IMR-90 (cell line): ENCODE measurements at regions of chr6 and their contacts with region 1.

Region 1: DNA sequence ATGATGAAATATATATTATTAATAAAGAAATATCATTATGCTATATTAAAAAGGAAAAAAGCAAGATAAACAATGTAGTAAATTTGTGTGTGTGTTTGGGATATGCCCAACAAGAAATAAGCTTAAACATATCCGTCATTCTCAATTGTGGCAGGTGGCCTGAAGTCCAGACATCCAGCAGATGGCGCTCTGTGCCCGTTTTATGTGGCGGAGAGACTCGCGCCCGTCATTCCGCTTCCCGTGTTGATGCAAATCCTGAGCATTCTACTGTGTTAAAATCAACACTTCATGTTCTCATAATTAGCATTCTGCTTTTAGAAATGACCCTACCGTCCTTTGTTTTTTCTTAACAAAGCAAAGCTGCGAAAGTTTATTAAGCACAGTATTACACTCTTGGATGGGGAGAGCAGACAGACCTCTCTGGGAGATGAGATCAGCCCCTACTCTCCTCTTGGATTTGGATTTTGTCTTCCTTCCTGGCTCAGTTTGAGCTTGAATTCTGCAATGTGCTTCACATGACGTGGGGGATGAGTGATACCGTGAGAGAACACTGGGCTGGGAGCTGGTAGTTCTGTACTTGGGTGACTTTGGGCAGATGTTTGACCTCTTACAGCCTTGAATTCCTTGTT is 125.8 kb downstream of the MCHR2 start:
- DNase-seq: peak; percentile 51
- ATAC-seq: peak; percentile 93
- H3K4me3 ChIP-seq: no peak overlapping the region
- H3K27ac ChIP-seq: no peak overlapping the region
- H3K4me1 ChIP-seq: no peaks in the 10 kb centered on the region
- H3K27me3 ChIP-seq: peaks cover 31% of the 10 kb centered on the region
- CTCF ChIP-seq: peak; percentile 84
- POLR2A ChIP-seq: no peak
- RAD21 ChIP-seq: peak; percentile 87

Region 2: DNA sequence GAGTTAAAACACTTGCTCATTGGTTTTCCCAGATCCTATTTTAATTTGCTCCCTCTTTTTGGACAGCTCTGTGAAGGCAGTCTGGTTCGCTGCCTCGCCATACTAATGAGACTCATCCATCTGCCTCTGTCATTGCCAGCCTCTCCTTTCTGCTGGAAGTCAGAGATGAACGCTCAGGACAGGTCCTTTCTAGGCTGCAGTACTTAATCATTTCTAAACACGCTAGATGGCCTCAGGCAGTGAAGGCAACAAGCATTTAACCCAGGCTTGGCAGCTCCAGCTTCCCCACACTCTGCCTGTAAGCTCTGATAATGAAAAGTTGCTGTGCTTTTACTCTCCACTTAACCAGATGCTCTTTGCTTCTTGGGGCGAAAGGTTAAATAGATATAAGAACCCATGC is 1320.6 kb before region 1 on chr6:
- CTCF ChIA-PET with region 1: no interaction called
- POLR2A ChIA-PET with region 1: no interaction called
- dilution Hi-C with region 1: no loop called
- in situ Hi-C with region 1: no loop called
- intact Hi-C with region 1: no loop called
- DNase-seq: no peak
- ATAC-seq: no peak
- H3K4me3 ChIP-seq: no peak overlapping the region
- H3K27ac ChIP-seq: no peak overlapping the region
- H3K4me1 ChIP-seq: no peaks in the 10 kb centered on the region
- H3K27me3 ChIP-seq: no peaks in the 10 kb centered on the region
- CTCF ChIP-seq: no peak
- POLR2A ChIP-seq: no peak
- RAD21 ChIP-seq: no peak

Region 3: GRCh38 chr6:99905209-99906106 is 37.3 kb after region 1 on chr6:
- CTCF ChIA-PET with region 1: interaction called, 3 read pairs
- POLR2A ChIA-PET with region 1: no interaction called
- dilution Hi-C with region 1: no loop called
- in situ Hi-C with region 1: no loop called
- intact Hi-C with region 1: loop called (anchors 1 kb)
- DNase-seq: peak; percentile 56
- ATAC-seq: peak; percentile 85; the same call in 1 of the 2 replicates
- H3K4me3 ChIP-seq: no peak overlapping the region
- H3K27ac ChIP-seq: no peak overlapping the region
- H3K4me1 ChIP-seq: no peaks in the 10 kb centered on the region
- H3K27me3 ChIP-seq: peaks cover 11% of the 10 kb centered on the region; the same call in 1 of the 2 replicates
- CTCF ChIP-seq: peak; percentile 79
- POLR2A ChIP-seq: no peak
- RAD21 ChIP-seq: peak; percentile 53

Region 4: DNA sequence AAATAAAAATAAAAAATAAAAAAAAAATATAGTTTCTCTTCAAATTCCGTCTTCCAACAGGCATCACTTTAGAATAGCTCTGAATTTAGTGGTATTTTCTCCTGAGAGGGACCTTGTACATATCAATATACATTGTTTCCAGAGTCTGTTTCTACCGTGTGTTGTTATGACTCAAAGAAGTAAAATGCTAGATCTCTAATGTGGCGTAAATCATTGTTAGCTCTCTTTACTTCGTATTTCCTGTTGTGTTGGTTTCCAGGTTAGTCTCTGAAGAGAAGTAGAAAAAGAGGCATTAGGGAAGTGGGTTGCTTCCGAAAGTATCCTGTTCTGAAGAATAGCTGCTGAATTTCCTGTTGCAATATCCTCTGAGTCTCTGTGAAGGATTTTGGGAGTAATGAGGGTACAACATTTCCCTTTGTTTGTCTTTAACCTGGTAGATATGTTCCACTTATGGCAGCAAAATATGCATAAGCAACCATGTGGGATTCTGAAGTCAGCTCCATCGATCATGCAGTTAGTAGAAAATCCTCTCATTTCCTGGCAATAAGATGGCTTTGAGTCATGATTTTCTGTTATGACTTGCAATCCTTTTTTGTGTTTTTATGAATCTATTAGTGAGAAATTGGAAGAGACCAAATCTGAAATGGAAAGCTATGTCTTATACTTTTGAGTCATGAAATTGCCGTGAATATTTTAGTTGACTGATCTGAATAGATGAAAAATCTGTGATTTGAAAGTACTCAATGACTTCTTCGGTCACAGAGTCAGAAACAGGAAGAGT is 167.9 kb after region 1 on chr6:
- CTCF ChIA-PET with region 1: no interaction called
- POLR2A ChIA-PET with region 1: no interaction called
- dilution Hi-C with region 1: no loop called
- in situ Hi-C with region 1: no loop called
- intact Hi-C with region 1: no loop called
- DNase-seq: no peak
- ATAC-seq: no peak
- H3K4me3 ChIP-seq: no peak overlapping the region
- H3K27ac ChIP-seq: no peak overlapping the region
- H3K4me1 ChIP-seq: no peaks in the 10 kb centered on the region
- H3K27me3 ChIP-seq: no peaks in the 10 kb centered on the region
- CTCF ChIP-seq: no peak
- POLR2A ChIP-seq: no peak
- RAD21 ChIP-seq: no peak

Region 5: DNA sequence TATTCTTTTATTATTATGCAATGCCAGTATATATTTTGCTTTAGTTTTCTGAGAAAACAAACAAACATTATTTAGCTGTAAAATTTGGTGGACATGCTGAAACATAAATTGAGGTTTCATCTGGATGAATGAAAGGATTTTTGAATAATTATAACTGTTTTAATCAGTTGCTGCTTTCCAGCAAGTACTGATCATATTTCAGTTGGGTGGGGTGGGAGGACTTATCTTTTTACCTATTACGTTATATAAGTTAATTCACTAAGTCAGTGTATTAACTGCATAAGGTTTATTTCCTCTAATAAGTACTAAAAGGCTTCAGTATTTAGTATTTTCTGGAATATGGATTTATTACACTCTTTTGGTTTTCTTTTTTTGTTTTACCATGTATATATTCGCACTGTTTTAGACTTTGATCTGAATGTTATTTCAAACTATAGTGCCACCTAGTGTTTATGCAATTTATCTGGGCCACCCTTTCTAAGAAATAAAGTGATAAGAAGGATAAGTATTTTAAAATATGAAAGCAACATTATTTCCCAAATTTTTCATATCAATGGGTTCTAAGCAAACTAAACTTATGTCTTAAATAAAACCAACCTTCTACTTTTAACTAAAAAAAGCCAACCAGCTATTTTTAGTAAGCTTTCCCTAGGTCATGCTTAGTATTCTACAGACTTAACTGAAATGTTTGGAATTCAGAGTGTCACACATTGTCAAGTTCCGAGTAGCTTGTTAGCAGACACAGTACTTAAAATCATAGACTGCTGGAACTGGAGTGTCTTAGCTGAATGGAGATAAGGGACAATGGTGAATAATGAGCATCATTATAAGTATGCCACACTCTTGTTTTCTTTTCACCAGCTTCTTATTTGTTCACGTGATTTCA is 231.2 kb after region 1 on chr6:
- CTCF ChIA-PET with region 1: interaction called, 51 read pairs
- POLR2A ChIA-PET with region 1: no interaction called
- dilution Hi-C with region 1: no loop called
- in situ Hi-C with region 1: loop called (anchors 5 kb)
- intact Hi-C with region 1: loop called (anchors 1 kb)
- DNase-seq: peak; percentile 41
- ATAC-seq: 0 out of 2 replicates have a peak, but pooled peaks have one; percentile 43
- H3K4me3 ChIP-seq: no peak overlapping the region
- H3K27ac ChIP-seq: no peak overlapping the region
- H3K4me1 ChIP-seq: peaks cover 9% of the 10 kb centered on the region
- H3K27me3 ChIP-seq: peaks cover 3% of the 10 kb centered on the region
- CTCF ChIP-seq: peak; percentile 70
- POLR2A ChIP-seq: no peak
- RAD21 ChIP-seq: peak; percentile 53

Region 6: DNA sequence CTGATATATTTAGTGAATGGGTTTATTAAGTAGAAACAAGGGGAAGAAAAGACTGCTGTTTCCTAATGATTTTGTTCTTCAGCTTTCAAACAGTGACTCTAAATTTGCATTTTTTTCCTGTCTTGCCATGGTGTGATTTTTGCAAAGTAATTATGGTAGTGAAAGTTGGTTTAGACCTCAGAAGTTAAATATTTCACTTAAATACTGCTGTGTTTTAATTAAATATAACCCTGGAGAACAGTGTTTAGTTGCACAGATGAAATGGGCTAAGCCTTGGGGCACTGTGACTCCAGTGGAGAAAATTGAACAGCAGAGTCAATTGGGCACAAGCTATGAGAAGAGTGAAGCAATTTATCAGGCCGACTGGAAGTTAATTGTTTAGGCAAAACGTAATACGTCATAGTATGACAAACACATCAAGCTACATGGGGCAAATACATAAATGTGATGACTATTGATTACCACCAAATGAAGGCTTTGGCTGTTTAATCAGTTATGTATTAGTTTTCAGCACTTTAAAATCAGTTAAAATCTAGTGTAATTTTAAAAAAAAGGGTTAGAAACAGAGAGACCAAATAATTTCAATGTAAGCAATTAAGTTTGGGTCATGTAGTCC is 237.1 kb after region 1 on chr6:
- CTCF ChIA-PET with region 1: interaction called, 51 read pairs
- POLR2A ChIA-PET with region 1: no interaction called
- dilution Hi-C with region 1: no loop called
- in situ Hi-C with region 1: no loop called
- intact Hi-C with region 1: no loop called
- DNase-seq: no peak
- ATAC-seq: no peak
- H3K4me3 ChIP-seq: no peak overlapping the region
- H3K27ac ChIP-seq: no peak overlapping the region
- H3K4me1 ChIP-seq: peaks cover 9% of the 10 kb centered on the region
- H3K27me3 ChIP-seq: peaks cover 7% of the 10 kb centered on the region
- CTCF ChIP-seq: no peak
- POLR2A ChIP-seq: no peak
- RAD21 ChIP-seq: no peak